ENCODE measurements at regions of chr17 and their contacts with region 1.

Region 1: DNA sequence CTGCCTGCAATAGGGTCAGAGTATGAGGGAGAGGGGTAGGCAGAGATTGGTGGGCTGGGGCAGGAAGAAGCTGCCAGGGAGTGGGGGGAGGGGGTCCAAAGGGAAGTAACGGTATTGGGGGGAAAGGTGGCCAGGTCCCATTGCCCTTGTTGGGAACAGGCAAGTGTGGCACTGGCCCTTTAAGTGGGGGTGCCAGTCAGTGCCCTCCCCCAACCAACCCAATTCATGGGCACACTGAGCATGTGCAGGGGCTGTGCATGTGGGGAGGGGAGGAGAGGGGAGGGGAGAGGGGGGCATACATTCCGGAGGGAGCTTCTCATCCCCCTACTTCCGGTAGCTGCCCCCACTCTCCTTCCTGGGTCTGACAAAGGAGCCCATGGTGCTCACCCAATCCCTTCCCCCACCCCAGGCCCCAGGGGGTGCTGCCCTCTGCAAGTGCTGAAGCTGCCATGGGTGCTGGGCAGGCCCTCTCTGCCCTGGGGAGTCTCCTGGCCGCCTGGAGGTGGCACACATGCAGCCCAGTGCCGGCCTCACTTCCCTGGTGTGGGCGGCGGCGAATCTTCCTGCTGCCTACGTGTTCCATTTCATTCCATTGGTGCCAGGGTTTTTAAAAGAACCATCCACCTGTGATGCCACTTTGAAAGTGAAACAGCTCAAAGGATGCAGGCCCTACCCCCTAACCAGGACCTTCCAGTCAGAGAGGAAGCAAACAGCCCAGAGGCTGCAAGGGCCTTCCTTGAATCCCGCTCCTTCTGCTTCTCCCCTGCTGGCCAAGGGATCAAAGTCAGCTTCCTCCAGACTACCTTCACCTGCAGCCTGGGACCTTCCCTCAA is 11.0 kb downstream of the HEXIM2 start:
- DNase-seq: peak; percentile 56
- CTCF ChIP-seq: no peak

Region 2: GRCh38 chr17:45016823-45017222 is 155.8 kb before region 1 on chr17:
- CTCF ChIA-PET with region 1: no interaction called
- POLR2A ChIA-PET with region 1: no interaction called
- DNase-seq: no peak
- CTCF ChIP-seq: no peak

Region 3: DNA sequence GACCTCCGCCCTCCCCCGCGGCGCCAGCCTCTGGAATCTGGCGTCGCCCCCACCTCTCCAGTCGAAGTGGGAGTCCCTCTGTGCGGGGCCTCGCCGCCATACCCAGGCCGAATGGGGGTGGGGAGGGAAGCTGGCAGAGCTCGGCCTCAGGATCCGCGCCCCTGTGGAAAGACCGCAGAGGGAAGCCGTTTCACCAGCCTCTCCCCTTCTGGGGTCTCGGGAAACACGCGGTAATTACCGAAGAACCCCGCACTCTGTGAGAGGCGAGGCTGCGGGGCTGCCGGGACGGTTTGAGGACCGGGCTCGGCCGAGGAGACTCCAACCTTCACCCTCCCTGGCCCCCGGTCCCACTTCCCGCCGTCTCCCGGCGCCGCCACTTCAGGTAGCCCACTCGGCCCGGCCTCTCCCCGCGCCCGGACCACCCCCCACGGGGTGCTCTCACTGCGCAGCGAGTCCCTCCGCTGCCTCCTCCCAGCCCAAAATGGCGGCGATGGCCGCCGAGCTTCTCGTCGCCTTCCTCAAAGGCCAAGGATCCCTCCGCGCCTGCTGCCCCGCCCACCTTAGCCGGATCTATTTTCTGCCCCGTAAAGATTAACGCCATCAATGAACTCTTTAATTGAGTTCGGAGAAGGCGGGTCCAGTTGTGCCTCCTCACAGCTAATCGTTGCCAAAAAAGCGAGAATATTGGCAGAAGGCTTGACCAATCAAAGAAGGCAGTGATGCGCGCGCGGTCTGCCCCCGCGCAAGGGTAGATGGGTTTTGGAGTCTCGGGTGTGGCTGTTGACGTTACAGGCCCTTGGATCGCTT is 11.4 kb before region 1 on chr17:
- CTCF ChIA-PET with region 1: interaction called, 23 read pairs
- POLR2A ChIA-PET with region 1: interaction called, 3 read pairs
- DNase-seq: peak; percentile 97
- CTCF ChIP-seq: peak; percentile 23

Region 4: DNA sequence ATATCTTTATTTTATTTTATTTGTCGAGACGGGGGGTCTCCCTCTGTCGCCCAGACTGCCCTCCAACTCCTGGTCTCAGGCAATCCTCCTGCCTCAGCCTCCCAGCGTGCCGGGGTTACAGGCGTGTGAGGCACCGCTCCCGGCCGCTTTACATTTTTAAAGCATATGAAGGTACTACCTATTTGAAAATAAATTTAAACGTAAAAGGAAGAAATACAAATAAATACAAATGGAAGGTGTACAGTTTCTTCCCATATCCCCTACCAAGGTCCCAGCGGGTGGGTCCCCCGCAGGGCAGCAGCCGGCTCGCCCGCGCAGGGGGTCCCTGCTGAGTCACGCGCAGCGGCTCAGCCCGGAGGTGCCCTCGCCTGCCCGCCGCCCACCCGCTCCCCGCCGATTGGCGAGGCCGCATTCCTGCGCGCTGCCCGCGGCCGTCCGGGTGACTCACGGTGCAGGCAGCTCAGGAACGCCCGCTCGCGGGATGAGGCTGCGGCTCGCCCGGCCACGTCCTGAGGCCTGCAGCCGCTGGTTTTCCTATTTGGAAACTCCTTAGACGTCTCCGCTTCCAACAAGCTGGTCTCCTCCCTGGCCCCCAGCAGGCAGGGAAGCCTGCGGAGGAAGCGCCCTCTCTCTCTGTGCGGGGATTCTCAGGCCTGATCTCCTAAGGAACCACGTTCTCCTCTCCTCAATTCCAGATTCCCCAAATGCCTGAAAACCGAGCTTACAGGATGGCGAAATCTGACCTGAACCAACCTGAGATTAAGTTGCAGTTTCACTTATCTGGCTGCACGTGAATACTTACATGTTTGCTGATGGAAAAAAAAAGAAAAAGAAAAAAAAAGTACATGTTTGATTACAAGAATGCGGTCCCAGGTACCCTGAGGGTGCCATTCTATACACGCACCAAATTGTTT is 199.0 kb after region 1 on chr17:
- CTCF ChIA-PET with region 1: no interaction called
- POLR2A ChIA-PET with region 1: no interaction called
- DNase-seq: no peak
- CTCF ChIP-seq: no peak

Region 5: DNA sequence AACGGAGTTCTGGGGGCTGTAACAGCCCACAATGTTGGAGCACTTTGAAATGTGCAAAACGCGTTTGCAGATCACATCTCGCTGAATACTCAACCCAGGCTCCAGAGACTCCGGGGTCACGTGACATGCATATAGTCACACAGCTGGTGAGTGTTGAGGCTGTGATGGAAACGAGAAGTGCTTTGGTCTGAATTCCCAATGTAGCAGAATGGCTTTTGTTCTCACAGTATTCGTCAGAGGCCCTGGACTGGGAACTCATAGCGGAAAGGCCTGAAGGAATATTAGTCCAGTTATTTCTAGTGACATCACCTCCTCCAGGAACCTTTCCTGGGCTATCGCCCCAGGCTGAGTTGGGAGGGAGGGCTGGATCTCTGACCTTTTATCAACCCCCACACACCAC is 515.7 kb after region 1 on chr17:
- CTCF ChIA-PET with region 1: no interaction called
- POLR2A ChIA-PET with region 1: no interaction called
- DNase-seq: no peak
- CTCF ChIP-seq: no peak